ENCODE measurements at regions of chr6 and their contacts with region 1.

Region 1: GRCh38 chr6:157535339-157536222 is 154.6 kb downstream of the ZDHHC14 start:
- DNase-seq: peak; percentile 45
- H3K4me3 Mint-ChIP-seq: no peak overlapping the region
- H3K27ac Mint-ChIP-seq: peak overlapping the region; percentile 53
- H3K4me1 Mint-ChIP-seq: peaks cover 24% of the 10 kb centered on the region
- H3K27me3 Mint-ChIP-seq: peaks cover 13% of the 10 kb centered on the region

Region 2: GRCh38 chr6:157379656-157380454 is 155.7 kb before region 1 on chr6:
- CTCF ChIA-PET with region 1: no interaction called
- POLR2A ChIA-PET with region 1: no interaction called
- intact Hi-C with region 1: loop called (anchors 5 kb)
- DNase-seq: peak; percentile 93
- H3K4me3 Mint-ChIP-seq: peak overlapping the region; percentile 78
- H3K27ac Mint-ChIP-seq: peak overlapping the region; percentile 71
- H3K4me1 Mint-ChIP-seq: peaks cover 31% of the 10 kb centered on the region
- H3K27me3 Mint-ChIP-seq: peaks cover 9% of the 10 kb centered on the region

Region 3: DNA sequence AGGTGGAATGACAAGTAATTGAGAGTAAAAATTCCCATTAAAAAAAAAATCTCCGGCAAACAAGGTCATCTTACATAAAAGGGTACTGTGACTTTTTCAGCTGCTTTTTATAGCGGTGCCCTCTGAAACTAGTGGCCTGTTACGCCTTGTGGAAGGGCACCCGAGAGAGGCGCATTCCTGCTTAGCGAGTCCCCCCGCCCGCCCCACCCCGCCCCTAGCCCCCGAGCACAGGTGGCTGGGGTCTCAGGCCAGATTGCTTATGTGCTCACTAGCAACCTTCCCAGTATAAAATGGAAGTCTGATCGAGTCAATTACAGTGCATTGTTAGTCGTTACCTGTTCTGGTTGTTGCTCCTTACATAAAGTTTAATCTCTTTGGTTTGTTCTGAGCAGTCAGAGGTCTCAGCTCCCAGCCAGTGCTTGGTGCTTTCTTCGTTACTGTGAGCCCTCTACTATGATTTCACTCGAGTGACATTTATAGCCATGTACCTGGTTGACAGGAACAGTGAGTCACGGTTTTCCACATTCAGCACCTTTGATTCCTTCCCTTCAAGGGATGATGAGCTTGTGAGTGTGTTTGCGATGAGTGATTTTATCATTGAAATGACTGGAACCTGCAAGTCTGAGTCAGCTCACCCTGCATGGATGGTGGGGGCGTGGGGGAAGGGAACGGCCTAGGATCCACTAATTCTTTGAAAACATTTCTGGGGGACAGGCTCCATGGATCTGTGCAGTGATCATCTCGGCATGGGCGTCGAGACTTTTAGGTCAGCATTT is 107.0 kb before region 1 on chr6:
- CTCF ChIA-PET with region 1: no interaction called
- POLR2A ChIA-PET with region 1: interaction called, 5 read pairs
- intact Hi-C with region 1: loop called (anchors 1 kb)
- DNase-seq: peak; percentile 88
- H3K4me3 Mint-ChIP-seq: no peak overlapping the region
- H3K27ac Mint-ChIP-seq: peak overlapping the region; percentile 74
- H3K4me1 Mint-ChIP-seq: peaks cover 37% of the 10 kb centered on the region
- H3K27me3 Mint-ChIP-seq: peaks cover 10% of the 10 kb centered on the region

Region 4: GRCh38 chr6:157461000-157461915 is 74.3 kb before region 1 on chr6:
- CTCF ChIA-PET with region 1: no interaction called
- POLR2A ChIA-PET with region 1: interaction called, 4 read pairs
- intact Hi-C with region 1: loop called (anchors 1 kb)
- DNase-seq: peak; percentile 89
- H3K4me3 Mint-ChIP-seq: no peak overlapping the region
- H3K27ac Mint-ChIP-seq: peak overlapping the region; percentile 75
- H3K4me1 Mint-ChIP-seq: peaks cover 40% of the 10 kb centered on the region
- H3K27me3 Mint-ChIP-seq: peaks cover 7% of the 10 kb centered on the region

Region 5: DNA sequence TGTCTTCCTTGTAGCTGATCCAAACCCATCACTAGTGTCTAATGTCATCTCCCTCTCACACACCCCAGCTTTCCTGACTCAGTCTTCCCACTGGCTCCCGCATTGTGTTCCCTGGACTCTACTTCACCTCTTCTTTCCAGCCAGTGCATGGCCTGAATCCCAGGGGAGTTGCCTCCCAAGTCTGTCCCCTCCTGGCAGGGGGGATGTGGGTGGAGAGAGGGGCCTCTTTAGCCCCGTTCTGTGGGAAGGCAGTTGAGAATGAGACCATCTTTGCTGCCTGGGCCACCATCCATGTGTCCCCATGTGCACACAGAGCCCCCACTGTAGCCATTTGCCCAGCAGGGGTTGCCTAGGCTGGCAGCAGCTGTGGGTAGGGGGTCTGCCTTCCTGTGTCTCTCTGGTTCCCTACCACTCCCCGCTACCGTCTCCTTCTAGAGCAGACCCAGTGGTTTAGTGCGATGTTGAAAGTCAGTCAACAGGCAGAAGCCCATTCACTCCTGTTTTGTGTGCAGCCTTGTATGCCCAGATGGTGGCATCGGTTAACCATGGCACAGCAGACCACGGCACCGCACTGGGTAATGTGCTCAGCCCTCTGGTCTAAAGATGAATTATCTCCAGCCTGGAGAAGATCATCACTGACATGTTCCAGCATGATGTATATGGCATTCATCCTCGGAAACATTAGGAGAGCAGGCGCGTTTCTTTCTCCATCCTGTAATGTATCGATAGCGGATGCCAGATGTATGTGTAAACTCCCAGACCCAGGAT is 108.6 kb after region 1 on chr6:
- CTCF ChIA-PET with region 1: no interaction called
- POLR2A ChIA-PET with region 1: no interaction called
- intact Hi-C with region 1: no loop called
- DNase-seq: peak; percentile 53
- H3K4me3 Mint-ChIP-seq: no peak overlapping the region
- H3K27ac Mint-ChIP-seq: no peak overlapping the region
- H3K4me1 Mint-ChIP-seq: peaks cover 13% of the 10 kb centered on the region
- H3K27me3 Mint-ChIP-seq: no peaks in the 10 kb centered on the region

Region 6: GRCh38 chr6:157667211-157668008 is 131.8 kb after region 1 on chr6:
- CTCF ChIA-PET with region 1: interaction called, 3 read pairs
- POLR2A ChIA-PET with region 1: no interaction called
- intact Hi-C with region 1: loop called (anchors 5 kb)
- DNase-seq: peak; percentile 68
- H3K4me3 Mint-ChIP-seq: no peak overlapping the region
- H3K27ac Mint-ChIP-seq: no peak overlapping the region
- H3K4me1 Mint-ChIP-seq: peaks cover 13% of the 10 kb centered on the region
- H3K27me3 Mint-ChIP-seq: peaks cover 7% of the 10 kb centered on the region

Measured in activated CD4-positive, alpha-beta memory T cell treated with anti-CD3 and anti-CD28 coated beads for 36 hours (primary cell).